SK-N-SH (cell line): ENCODE measurements at regions of chr19 and their contacts with region 1.

Region 1: DNA sequence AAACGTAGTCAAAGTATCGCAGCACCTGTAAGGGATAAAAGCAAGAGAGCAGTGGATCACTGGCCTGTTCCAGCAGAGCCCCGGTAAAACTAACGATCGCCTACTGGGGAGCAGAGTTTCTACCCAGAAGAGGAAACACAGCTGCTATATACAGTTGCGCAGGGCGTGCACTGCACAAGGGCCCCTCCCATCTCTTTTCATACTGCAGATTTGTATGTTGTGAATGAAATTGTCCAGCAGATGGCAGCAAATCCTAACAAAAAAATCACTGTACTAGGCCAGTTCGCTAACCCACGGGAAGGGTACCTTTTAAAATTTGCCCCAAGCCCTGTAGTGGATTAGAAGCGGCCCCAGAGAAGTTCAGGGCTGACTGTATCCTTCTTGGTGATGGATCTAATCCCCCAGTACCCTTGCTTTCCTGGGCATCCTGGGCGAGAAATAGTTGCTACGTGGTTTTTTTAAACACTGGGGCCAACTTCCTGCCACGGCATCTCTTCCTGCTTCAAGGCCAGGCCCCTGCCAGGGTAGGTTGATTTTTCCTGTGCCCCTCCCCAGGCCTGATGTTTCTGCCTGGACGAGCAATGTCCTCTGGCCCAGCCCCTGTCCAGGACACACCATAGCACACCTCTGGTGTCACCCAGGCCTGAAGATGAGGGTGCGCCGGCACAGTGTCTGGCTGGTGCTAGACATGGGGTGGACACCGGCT is 127.0 kb downstream of the IER2 start:
- DNase-seq: peak; percentile 76
- H3K4me3 ChIP-seq: no peak overlapping the region; a peak in 1 of 4 replicates
- H3K27ac ChIP-seq: no peak overlapping the region
- H3K4me1 ChIP-seq: no peaks in the 10 kb centered on the region
- H3K27me3 ChIP-seq: peaks cover 35% of the 10 kb centered on the region
- CTCF ChIP-seq: peak; percentile 68
- EP300 ChIP-seq: no peak
- RAD21 ChIP-seq: peak; percentile 85

Region 2: GRCh38 chr19:12994701-12995595 is 282.3 kb before region 1 on chr19 and contains the start of gene NFIX:
- CTCF ChIA-PET with region 1: no interaction called
- POLR2A ChIA-PET with region 1: no interaction called
- DNase-seq: peak; percentile 86
- H3K4me3 ChIP-seq: peak within 1 kb of the TSS; percentile 57 to 77
- H3K27ac ChIP-seq: no peak within 1 kb of the TSS; a peak in 1 of 4 replicates
- H3K4me1 ChIP-seq: peaks cover 0 to 17% of the 10 kb centered on the region in 2 experiments; a peak in 1 of 4 replicates
- H3K27me3 ChIP-seq: no peaks in the 10 kb centered on the region
- CTCF ChIP-seq: no peak
- EP300 ChIP-seq: no peak
- RAD21 ChIP-seq: no peak
- polyA plus RNA-seq, gene NFIX: 5.1 and 14.8 TPM in 2 replicates

Region 3: DNA sequence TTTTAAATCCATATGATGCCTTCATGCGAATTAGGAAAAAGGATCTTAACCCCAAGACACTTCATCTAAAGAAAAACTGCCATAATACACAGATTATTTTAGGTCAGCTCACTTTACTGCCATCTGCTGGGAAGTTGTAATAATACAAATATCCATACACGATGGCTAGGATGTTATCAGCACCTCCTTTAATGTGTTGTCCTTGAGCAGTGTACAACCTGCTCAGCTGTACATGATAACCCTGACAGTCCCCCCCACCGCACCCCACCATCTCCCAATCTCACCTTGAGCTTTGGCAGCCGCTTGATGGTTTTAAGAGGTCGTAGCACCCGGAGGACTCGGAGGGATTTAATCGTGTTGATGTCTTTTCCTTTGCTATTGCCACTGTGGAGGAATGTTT is 14.8 kb before region 1 on chr19:
- CTCF ChIA-PET with region 1: interaction called, 11 read pairs
- POLR2A ChIA-PET with region 1: no interaction called
- DNase-seq: peak; percentile 66
- H3K4me3 ChIP-seq: no peak overlapping the region
- H3K27ac ChIP-seq: no peak overlapping the region
- H3K4me1 ChIP-seq: peaks cover 0 to 3% of the 10 kb centered on the region in 2 experiments; a peak in 2 of 4 replicates
- H3K27me3 ChIP-seq: peaks cover 55% of the 10 kb centered on the region; the same call in 1 of the 2 replicates
- CTCF ChIP-seq: peak; percentile 73
- EP300 ChIP-seq: no peak
- RAD21 ChIP-seq: peak; percentile 71

Region 4: GRCh38 chr19:13291759-13292312 is 14.6 kb after region 1 on chr19:
- CTCF ChIA-PET with region 1: interaction called, 16 read pairs
- POLR2A ChIA-PET with region 1: no interaction called
- DNase-seq: no peak
- H3K4me3 ChIP-seq: no peak overlapping the region
- H3K27ac ChIP-seq: no peak overlapping the region
- H3K4me1 ChIP-seq: no peaks in the 10 kb centered on the region
- H3K27me3 ChIP-seq: peaks cover 63% of the 10 kb centered on the region
- CTCF ChIP-seq: no peak
- EP300 ChIP-seq: no peak
- RAD21 ChIP-seq: no peak

Region 5: GRCh38 chr19:13297023-13297422 is 19.8 kb after region 1 on chr19:
- CTCF ChIA-PET with region 1: interaction called, 12 read pairs
- POLR2A ChIA-PET with region 1: no interaction called
- DNase-seq: no peak
- H3K4me3 ChIP-seq: no peak overlapping the region
- H3K27ac ChIP-seq: no peak overlapping the region
- H3K4me1 ChIP-seq: no peaks in the 10 kb centered on the region
- H3K27me3 ChIP-seq: peaks cover 75% of the 10 kb centered on the region
- CTCF ChIP-seq: no peak
- EP300 ChIP-seq: no peak
- RAD21 ChIP-seq: no peak

Region 6: DNA sequence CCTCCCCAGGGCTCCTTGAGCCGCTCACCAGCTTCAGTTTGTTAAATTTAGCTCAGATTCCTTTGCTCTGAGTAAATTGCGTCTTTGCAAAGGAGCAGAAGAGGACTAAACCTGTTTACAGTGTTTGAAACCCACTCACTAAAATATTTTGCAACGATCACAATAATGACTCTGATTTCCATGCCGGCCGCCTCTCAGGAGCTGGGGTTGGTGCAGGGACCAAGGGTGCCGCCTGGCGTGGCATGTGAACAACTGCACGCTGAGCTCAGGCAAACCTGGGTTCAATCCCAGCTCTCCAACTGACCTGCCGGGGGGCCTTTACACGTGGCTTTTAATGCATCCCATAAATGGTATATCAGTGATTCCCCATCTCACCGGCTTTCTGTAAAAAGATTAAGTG is 297.7 kb after region 1 on chr19:
- CTCF ChIA-PET with region 1: interaction called, 11 read pairs
- POLR2A ChIA-PET with region 1: no interaction called
- DNase-seq: peak; percentile 43
- H3K4me3 ChIP-seq: no peak overlapping the region
- H3K27ac ChIP-seq: no peak overlapping the region
- H3K4me1 ChIP-seq: no peaks in the 10 kb centered on the region
- H3K27me3 ChIP-seq: peaks cover 39% of the 10 kb centered on the region
- CTCF ChIP-seq: peak; percentile 54
- EP300 ChIP-seq: no peak
- RAD21 ChIP-seq: peak; percentile 52

Region 7: DNA sequence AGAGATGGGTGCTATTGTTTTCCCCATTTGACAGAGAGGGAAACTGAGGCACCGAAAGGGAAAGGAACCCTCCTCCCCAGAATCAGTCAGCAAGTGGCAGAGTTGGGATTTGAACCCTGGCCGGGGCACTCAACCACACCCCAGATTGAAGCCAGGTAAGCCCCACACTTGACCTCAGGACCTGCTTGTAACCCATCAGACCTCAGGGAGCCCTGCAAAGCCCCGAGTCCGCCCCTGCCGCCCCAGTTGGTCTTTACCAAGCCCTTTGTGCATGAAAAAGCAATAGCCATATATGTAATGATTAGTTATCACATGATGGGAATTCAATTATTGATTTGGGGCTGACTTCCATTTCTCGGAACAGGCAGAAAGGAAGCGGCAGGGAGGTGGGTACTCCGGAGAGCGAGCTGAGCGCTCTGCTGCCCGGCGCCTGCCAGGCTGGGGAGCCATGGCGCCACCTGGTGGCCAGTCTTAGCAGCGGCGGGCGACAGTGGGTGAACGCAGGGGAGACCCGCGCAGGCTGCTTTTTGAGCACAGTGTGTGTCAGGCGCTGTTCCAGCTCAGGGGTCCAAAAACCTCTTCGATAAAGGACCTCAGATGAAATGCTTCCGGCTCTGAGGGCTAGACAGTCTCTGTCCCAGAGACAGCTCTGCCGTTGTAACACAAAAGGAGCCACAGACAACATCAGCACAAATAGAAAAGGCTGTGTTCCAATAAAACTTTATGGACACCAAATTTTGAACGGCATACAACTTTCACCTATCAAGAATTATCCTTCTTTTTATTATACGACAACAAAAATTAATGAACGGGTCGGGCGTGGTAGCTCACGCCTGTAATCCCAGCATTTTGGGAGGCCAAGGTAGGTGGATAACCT is 311.9 kb after region 1 on chr19:
- CTCF ChIA-PET with region 1: interaction called, 44 read pairs
- POLR2A ChIA-PET with region 1: interaction called, 3 read pairs
- DNase-seq: peak; percentile 84
- H3K4me3 ChIP-seq: no peak overlapping the region; a peak in 1 of 4 replicates
- H3K27ac ChIP-seq: no peak overlapping the region
- H3K4me1 ChIP-seq: no peaks in the 10 kb centered on the region
- H3K27me3 ChIP-seq: peaks cover 30% of the 10 kb centered on the region
- CTCF ChIP-seq: peak; percentile 91
- EP300 ChIP-seq: no peak
- RAD21 ChIP-seq: peak; percentile 71